ENCODE measurements at regions of chr21 and their contacts with region 1.

Region 1: GRCh38 chr21:44845399-44846223 is 27.7 kb upstream of the SUMO3 start:
- DNase-seq: peak; percentile 65
- H3K4me3 Mint-ChIP-seq: peak overlapping the region; percentile 65
- H3K27ac Mint-ChIP-seq: no peak overlapping the region
- H3K4me1 Mint-ChIP-seq: peaks cover 10% of the 10 kb centered on the region
- H3K27me3 Mint-ChIP-seq: peaks cover 5% of the 10 kb centered on the region

Region 2: DNA sequence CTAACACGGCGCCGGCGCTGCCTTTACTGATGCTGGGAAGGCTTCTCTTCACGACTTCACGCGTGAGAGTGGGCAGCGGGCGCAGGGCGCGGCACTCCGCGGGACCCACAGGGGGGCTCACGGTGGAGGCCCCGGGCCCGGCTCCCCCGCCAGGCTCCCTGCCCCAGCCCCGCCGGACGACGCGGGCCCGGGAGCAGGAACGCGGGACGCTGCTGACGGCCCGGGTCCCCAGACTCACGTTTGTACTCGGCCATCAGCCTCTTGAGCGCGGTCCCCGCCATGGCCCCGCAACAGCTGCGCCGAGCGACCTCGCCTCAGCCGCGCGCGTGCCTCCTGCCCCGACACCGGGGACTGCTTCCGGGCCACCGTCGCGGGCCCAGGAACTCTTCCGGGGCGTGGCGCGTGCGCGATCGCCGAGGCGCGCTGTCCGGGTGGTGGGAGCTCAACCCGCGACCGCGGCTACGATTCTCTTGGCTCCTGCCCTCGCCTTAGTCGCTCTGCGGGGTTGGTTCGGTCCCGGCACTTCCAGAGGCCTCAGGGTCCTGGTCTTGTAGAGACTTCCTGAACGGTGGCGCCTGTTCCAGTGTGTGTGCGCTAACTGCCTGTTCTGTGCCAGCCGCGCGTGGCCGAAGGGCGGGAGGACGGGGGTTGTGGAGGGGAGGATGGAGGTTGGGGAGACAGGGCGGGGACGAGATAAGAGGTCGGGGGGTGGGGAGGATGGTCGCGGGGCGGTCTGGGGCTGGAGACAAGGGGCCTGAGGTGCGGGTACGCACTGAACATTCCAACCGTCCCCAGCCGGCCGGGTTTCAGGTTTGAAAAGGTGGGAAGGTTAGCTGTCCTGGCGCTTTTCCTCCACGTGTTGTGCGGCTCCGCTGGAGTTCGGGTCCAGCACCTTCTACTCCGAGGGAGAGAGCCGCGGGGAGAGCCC is 43.9 kb before region 1 on chr21 and contains the start of gene UBE2G2:
- intact Hi-C with region 1: loop called (anchors 2 kb)
- DNase-seq: peak; percentile 87
- H3K4me3 Mint-ChIP-seq: peak within 1 kb of the TSS; percentile 99
- H3K27ac Mint-ChIP-seq: peak within 1 kb of the TSS; percentile 94
- H3K4me1 Mint-ChIP-seq: peaks cover 54% of the 10 kb centered on the region
- H3K27me3 Mint-ChIP-seq: no peaks in the 10 kb centered on the region
- total RNA-seq, gene UBE2G2: 137 and 151 TPM in 2 replicates

Measured in activated T-helper 1 cell treated with anti-CD3 and anti-CD28 coated beads, Interleukin-12 subunit alpha, Interleukin-12 subunit beta, Interleukin-2, Interleukin-4 antibody, amounts not matched to agents 30 ng/mL and 10 ng/mL and 1 ng/mL, durations not matched to agents 14 hours and 24 hours and 36 hours (primary cell).